ENCODE measurements at regions of chr2 and their contacts with region 1.

Region 1: DNA sequence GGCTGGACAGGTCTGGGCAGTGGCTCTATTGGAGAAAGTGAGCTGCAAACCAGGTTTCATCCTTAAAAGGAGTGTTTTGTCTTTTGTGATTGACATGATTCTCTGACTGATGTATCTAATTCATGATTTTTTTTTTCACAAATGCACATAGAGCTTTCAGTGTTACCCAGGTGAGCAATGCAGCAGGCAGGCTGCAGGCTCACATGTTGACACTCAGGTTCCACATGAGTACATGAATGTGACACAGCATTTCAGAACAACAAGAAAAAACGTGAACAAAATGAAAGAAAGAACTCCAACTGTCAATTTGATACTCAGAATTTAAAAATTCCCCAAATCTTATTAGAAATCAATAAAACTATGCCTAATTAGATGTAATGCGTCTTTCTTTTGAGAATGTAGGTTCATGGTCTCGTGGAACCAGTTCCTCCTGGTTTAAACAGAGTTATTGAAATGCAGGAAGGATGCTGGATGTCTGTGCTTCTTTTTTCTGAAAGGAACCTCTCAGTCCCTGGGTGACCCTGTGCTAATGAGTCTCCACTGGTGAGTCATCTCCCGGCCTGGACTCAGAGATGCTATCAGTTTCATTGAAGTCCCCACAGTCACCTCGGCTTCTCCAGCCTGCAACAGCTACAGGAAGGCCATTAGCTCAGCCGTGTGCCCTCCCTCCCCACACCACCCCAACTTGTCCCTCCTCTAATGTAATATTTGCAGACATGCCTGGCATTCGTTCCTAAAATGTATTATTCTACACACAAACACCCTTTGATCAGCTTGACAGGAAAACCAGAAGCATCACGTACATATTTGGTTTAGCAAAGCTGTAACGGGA is 430.4 kb downstream of the LPIN1 start:
- DNase-seq: peak; percentile 88
- ATAC-seq: peak; percentile 99
- H3K4me3 ChIP-seq: no peak overlapping the region
- H3K27ac ChIP-seq: peak overlapping the region; percentile 22
- H3K4me1 ChIP-seq: peaks cover 17% of the 10 kb centered on the region
- H3K27me3 ChIP-seq: no peaks in the 10 kb centered on the region
- CTCF ChIP-seq: no peak

Region 2: DNA sequence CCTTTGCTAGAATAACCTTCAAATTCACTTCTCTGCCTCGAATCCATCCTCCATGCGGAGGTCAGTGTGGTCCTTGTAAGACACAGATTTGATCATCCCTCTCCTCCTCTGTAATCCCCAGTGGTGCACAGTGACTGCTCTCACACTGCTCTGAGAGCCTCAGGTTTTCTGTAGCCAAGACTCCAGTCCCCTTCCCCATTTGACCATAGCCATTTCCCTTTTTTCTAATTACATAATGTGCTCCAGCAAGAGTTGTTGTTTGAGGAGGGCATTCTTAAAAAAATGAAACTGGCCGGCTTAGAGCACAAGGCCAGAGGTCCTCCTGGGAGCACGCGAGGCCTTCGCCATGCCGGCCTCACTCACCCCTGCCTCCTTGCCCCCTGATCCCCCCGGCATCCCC is 465.1 kb before region 1 on chr2:
- CTCF ChIA-PET with region 1: no interaction called
- POLR2A ChIA-PET with region 1: interaction called, 12 read pairs
- intact Hi-C with region 1: no loop called
- DNase-seq: no peak
- ATAC-seq: no peak
- H3K4me3 ChIP-seq: no peak overlapping the region
- H3K27ac ChIP-seq: peak overlapping the region; percentile 88
- H3K4me1 ChIP-seq: peaks cover 63% of the 10 kb centered on the region
- H3K27me3 ChIP-seq: no peaks in the 10 kb centered on the region
- CTCF ChIP-seq: no peak

Region 3: DNA sequence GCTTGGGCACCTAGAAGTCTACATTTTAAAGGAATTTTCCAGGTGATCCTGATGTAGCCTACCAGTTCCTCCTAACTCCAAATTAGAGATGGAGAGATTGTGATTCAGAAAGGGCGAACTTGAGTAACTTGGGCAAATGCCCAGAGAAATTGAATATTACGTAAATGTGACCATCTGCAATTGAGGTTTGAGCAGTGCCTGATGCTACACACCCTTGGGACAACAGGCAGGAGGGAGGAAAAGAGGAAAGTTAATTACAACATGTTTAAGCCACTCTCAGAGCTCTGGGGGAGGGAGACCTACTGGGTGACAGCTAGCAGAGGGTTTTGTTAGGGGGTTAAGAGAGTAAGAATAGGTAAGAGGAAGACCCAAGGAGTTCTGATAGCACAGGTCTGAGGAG is 221.5 kb before region 1 on chr2:
- CTCF ChIA-PET with region 1: no interaction called
- POLR2A ChIA-PET with region 1: no interaction called
- intact Hi-C with region 1: loop called (anchors 10 kb)
- DNase-seq: peak; percentile 10
- ATAC-seq: no peak
- H3K4me3 ChIP-seq: no peak overlapping the region
- H3K27ac ChIP-seq: no peak overlapping the region
- H3K4me1 ChIP-seq: no peaks in the 10 kb centered on the region
- H3K27me3 ChIP-seq: no peaks in the 10 kb centered on the region
- CTCF ChIP-seq: no peak

Measured in PC-3 (cell line).